ENCODE measurements at regions of chr14 and their contacts with region 1.

Region 1: DNA sequence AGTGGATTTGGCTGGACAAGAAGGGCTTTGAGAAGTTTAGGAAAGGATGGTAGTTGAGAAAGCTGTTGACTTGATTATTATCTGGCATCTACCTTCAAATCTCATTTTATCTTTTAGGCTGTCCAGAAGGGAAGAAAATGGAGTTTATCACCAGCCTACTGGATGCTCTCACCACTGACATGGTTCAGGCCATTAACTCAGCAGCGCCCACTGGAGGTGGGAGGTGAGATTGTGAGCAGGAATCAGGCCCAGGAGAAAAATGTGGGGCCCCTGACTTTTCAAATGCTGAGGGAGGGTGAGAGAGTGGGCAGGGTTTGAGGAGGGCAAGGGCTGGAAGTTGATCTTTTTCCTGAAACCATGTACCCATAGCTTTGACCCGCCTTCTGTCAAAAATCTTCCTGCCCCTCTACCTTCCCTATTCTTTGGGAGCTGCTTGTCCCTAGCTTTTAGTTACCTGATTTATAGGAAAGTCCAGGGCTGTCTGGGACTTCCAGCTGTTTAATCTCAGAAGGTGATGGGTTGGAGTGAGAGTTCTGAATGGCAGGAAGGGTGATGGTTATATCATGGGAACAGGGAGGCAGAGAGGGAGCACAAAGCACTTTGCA is 134.2 kb downstream of the SMOC1 start:
- DNase-seq: no peak
- ATAC-seq: no peak

Region 2: DNA sequence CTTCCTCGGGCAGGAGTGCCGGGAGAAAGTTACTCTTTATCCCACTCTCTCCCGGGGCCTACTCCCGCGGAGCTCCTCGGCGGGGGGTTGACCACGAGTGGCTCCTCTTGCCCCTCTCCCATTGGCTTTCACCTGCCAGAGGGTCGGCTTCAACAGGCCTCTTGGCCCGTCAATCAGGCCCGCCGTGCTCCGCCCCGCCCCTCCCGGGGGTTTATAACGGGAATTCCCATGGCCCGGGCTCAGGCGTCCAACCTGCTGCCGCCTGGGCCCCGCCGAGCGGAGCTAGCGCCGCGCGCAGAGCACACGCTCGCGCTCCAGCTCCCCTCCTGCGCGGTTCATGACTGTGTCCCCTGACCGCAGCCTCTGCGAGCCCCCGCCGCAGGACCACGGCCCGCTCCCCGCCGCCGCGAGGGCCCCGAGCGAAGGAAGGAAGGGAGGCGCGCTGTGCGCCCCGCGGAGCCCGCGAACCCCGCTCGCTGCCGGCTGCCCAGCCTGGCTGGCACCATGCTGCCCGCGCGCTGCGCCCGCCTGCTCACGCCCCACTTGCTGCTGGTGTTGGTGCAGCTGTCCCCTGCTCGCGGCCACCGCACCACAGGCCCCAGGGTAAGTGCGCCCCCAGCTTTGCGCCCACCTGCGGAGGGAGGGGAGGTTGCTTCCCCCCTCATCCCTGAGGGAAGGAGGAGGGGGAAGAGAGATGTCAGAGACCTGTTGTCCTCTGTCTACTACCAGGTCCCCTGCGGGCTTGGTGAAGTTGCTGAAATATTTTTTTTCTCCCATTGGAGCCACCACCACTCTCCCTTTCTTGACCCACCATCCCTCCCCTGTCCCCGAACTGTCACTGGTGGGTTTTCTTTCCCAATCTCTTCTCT is 134.0 kb before region 1 on chr14 and contains the start of gene SMOC1:
- intact Hi-C with region 1: loop called (anchors 10 kb)
- DNase-seq: no peak
- ATAC-seq: peak; percentile 56
- total RNA-seq, gene SMOC1: 1.2 TPM

Measured in Right ventricle myocardium inferior (tissue), 1 donor.